ENCODE measurements at regions of chr1 and their contacts with region 1.

Region 1: GRCh38 chr1:78114034-78114956 is 68.5 kb downstream of the GIPC2 start:
- DNase-seq: no peak
- H3K4me3 ChIP-seq: no peak overlapping the region
- H3K27ac ChIP-seq: no peak overlapping the region
- H3K4me1 ChIP-seq: no peaks in the 10 kb centered on the region
- H3K27me3 ChIP-seq: peaks cover 0 to 3% (median 0%) of the 10 kb centered on the region in 4 experiments; a peak in 1 of 7 replicates
- CTCF ChIP-seq: peak in 2 of 3 experiments; percentile 68 to 100; a peak in 3 of 4 replicates
- EP300 ChIP-seq: no peak
- POLR2A ChIP-seq: no peak
- RAD21 ChIP-seq: peak; percentile 93 to 95

Region 2: GRCh38 chr1:77986810-77987209 is 127.5 kb before region 1 on chr1:
- CTCF ChIA-PET with region 1: interaction called, 20 read pairs
- POLR2A ChIA-PET with region 1: no interaction called
- DNase-seq: no peak
- H3K4me3 ChIP-seq: no peak overlapping the region
- H3K27ac ChIP-seq: no peak overlapping the region
- H3K4me1 ChIP-seq: peaks cover 0 to 6% (median 0%) of the 10 kb centered on the region in 4 experiments; a peak in 1 of 7 replicates
- H3K27me3 ChIP-seq: no peaks in the 10 kb centered on the region
- CTCF ChIP-seq: no peak
- EP300 ChIP-seq: no peak
- POLR2A ChIP-seq: no peak
- RAD21 ChIP-seq: no peak

Region 3: GRCh38 chr1:77994117-77994705 is 120.1 kb before region 1 on chr1:
- CTCF ChIA-PET with region 1: interaction called, 18 read pairs
- POLR2A ChIA-PET with region 1: no interaction called
- DNase-seq: no peak
- H3K4me3 ChIP-seq: no peak overlapping the region
- H3K27ac ChIP-seq: no peak overlapping the region
- H3K4me1 ChIP-seq: no peaks in the 10 kb centered on the region
- H3K27me3 ChIP-seq: no peaks in the 10 kb centered on the region
- CTCF ChIP-seq: no peak
- EP300 ChIP-seq: no peak
- POLR2A ChIP-seq: no peak
- RAD21 ChIP-seq: no peak

Region 4: GRCh38 chr1:78070758-78071157 is 43.5 kb before region 1 on chr1:
- CTCF ChIA-PET with region 1: no interaction called
- POLR2A ChIA-PET with region 1: no interaction called
- DNase-seq: no peak
- H3K4me3 ChIP-seq: no peak overlapping the region
- H3K27ac ChIP-seq: no peak overlapping the region
- H3K4me1 ChIP-seq: no peaks in the 10 kb centered on the region
- H3K27me3 ChIP-seq: no peaks in the 10 kb centered on the region
- CTCF ChIP-seq: no peak
- EP300 ChIP-seq: no peak
- POLR2A ChIP-seq: no peak
- RAD21 ChIP-seq: no peak

Region 5: GRCh38 chr1:78101514-78101913 is 12.8 kb before region 1 on chr1:
- CTCF ChIA-PET with region 1: interaction called, 25 read pairs
- POLR2A ChIA-PET with region 1: no interaction called
- DNase-seq: no peak
- H3K4me3 ChIP-seq: no peak overlapping the region
- H3K27ac ChIP-seq: no peak overlapping the region
- H3K4me1 ChIP-seq: no peaks in the 10 kb centered on the region
- H3K27me3 ChIP-seq: no peaks in the 10 kb centered on the region
- CTCF ChIP-seq: no peak
- EP300 ChIP-seq: no peak
- POLR2A ChIP-seq: no peak
- RAD21 ChIP-seq: no peak

Region 6: DNA sequence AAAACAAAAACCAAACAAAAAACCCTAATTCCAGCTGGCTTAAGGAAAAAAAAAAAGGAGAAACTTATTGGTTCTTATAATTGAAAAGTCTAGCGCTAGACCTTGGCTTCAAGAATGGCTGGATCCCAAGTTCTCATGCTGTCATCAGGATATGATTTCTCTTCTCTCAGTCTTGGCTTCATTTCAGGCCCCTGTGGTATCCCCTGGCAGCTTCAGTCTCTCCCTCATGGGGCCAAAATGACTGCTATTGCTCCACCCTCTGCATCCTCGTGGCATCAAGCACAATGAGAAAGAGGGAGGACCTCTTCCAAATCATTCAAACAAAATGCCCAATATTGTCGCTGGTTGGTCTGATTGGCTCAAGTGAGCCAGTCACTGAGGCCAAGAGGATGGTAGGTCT is 12.2 kb after region 1 on chr1:
- CTCF ChIA-PET with region 1: interaction called, 10 read pairs
- POLR2A ChIA-PET with region 1: no interaction called
- DNase-seq: no peak
- H3K4me3 ChIP-seq: no peak overlapping the region
- H3K27ac ChIP-seq: no peak overlapping the region
- H3K4me1 ChIP-seq: no peaks in the 10 kb centered on the region; a peak in 1 of 7 replicates
- H3K27me3 ChIP-seq: no peaks in the 10 kb centered on the region
- CTCF ChIP-seq: no peak
- EP300 ChIP-seq: no peak
- POLR2A ChIP-seq: no peak
- RAD21 ChIP-seq: no peak

Region 7: DNA sequence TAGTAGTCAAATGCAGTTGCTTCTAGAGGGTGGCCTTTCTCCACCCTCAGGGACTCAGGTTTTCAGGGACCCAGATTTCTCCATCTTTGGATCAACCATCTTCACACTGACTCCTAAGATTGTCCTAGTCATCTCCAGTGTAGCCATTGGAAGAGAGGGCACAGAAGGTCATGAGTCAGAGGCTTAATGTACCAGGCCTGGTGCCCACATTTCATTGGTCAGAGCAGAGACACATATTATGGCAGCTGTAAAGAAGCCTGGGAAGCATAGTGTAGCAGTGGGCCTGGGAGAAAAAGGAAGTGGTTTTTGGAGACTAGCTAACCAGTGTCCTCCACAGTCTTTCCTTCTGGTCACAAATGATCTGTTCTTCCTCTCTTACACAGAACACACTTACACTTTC is 54.0 kb after region 1 on chr1:
- CTCF ChIA-PET with region 1: no interaction called
- POLR2A ChIA-PET with region 1: no interaction called
- DNase-seq: no peak
- H3K4me3 ChIP-seq: no peak overlapping the region
- H3K27ac ChIP-seq: no peak overlapping the region
- H3K4me1 ChIP-seq: no peaks in the 10 kb centered on the region
- H3K27me3 ChIP-seq: no peaks in the 10 kb centered on the region
- CTCF ChIP-seq: no peak
- EP300 ChIP-seq: no peak
- POLR2A ChIP-seq: no peak
- RAD21 ChIP-seq: no peak